ENCODE measurements at regions of chr17 and their contacts with region 1.

Region 1: GRCh38 chr17:63946440-63947367 is 14.6 kb upstream of the CD79B start:
- DNase-seq: peak; percentile 90
- CTCF ChIP-seq: peak; percentile 79

Region 2: GRCh38 chr17:63665527-63666214 is 281.0 kb before region 1 on chr17:
- CTCF ChIA-PET with region 1: no interaction called
- POLR2A ChIA-PET with region 1: no interaction called
- DNase-seq: peak; percentile 50
- CTCF ChIP-seq: no peak

Region 3: DNA sequence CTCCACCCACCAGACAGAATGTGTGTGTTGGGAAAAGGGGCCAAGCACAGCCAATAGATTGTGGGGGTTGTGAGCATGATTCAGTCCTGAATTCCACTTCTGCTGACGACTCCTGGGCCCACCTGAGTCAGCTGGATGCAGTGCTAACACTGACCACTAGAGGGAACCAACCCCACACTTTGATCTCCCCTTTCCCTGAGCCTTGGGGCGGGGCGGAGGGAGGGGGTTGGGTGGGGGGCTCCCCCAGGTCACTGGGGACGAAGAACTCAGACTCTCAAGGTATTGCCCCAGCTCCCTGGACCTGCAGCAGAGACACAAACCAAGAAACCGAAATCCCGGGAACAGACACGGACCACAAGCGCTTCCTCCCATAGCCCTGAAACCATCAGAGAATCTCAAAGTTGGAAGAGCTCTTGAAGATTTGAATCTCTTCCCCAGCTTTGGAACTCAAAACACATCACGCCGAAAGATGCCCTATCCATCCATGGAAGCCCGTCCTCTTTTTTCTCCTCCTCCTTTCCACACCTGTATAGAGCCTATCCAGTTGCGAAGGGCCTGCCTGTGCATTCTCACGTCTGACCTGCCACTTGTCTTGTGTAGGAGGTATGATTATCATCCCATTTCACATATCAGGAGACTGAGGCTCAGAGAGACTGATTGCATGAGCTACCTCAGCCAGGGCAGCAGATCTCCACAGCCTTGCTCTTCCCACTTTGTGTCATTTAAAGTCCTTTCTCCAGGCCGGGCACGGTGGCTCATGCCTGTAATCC is 34.9 kb before region 1 on chr17:
- CTCF ChIA-PET with region 1: interaction called, 207 read pairs
- POLR2A ChIA-PET with region 1: no interaction called
- DNase-seq: peak; percentile 76
- CTCF ChIP-seq: peak; percentile 79

Region 4: DNA sequence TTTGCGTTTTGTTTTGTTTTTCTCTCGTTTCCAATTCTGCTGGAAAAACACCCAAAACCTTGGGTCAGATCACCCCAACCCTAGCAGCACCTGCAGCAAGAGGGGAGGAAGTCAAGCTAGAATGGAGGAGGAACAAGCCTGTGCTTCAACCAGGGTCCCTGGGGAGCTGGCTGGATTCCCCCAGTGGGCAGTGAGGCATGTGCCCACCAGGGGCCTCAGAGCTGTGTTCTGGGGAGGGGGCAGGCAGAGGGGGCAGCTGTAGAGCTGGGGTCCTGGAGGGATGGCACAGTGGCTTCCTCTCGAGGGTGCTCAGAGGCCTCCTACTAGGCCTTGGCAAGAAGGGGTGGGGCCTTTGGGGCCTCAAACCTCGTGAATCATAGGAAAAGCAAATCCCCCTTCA is 21.1 kb before region 1 on chr17:
- CTCF ChIA-PET with region 1: interaction called, 207 read pairs
- POLR2A ChIA-PET with region 1: interaction called, 5 read pairs
- DNase-seq: no peak
- CTCF ChIP-seq: no peak

Region 5: DNA sequence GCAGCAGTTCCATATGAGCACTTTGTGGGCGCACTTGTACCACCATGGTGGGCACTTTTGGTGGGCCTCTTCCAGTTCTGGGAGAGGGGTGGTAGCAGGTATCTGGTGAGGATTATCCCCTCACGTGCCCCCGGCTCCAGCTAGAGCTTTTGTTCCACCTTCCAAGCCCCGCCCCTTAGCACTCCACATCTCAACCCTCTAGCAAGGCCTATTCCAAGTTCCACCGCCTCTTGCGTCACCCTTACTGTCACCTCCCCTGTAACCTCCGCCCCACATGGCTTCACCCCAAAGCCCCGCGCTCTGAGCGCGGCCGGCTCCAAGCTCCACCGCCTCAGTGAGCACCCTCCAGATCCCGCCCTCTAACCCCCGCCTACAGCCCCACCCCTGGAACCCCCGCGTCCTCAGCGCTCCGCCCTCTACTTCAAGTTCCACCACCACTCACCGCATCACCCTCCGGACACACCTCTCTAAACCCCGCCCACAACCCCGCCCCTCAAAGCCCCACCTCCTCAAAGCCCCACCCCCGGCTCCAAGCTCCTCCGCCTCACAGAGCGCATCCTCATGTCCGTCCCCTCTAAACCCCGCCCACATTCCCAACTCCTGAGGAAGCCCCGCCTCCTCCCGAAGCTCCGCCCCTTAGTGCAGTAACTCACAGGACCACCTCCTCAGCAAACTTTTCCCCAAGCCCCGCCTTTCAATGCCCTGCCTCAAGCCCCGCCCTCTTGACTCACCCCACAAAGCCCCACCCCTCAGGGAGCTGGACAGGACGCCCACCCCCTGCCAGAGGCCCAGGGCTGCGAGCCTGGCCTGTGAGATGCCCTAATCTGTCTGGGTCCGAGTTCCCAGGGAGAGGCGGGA is 14.9 kb after region 1 on chr17:
- CTCF ChIA-PET with region 1: interaction called, 54 read pairs
- POLR2A ChIA-PET with region 1: no interaction called
- DNase-seq: peak; percentile 74
- CTCF ChIP-seq: no peak

Region 6: DNA sequence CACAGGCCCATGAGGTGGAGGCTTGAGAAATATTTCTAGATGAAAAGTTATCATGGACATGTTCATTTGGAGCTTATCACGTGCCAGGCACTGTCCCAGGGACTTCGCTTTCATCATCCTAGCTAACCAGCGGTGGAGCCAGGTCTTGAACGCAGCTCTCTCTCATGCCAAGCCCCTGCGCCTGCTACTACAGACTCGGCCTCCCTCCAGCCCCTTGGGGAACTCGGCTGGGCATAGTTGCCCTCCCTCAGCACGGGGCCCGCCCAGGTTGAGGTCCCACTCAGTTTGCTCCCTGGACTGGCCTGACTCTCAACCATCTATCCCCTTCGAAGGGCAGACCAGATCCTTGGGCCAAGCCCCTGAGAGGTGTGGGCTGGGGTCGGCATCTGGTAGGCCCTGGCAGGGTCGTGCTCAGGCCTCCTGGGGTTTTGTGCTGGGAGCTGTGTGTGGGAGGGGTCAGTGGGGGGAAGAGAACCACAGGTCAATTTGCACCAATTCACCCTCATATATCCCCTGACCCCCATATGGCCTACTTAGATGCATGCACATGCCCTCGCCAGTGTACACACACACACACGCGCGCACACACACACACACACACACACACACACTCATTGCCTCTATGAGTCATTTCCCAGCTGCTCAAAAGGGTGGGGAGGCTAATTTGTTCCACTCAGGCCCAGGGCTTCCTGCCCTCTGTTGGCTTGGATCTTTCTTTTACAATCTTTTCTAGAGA is 38.1 kb after region 1 on chr17:
- CTCF ChIA-PET with region 1: interaction called, 26 read pairs
- POLR2A ChIA-PET with region 1: no interaction called
- DNase-seq: no peak
- CTCF ChIP-seq: no peak